Activated naive CD4-positive, alpha-beta T cell treated with anti-CD3 and anti-CD28 coated beads for 36 hours (primary cell): ENCODE measurements at regions of chr11 and their contacts with region 1.

Region 1: DNA sequence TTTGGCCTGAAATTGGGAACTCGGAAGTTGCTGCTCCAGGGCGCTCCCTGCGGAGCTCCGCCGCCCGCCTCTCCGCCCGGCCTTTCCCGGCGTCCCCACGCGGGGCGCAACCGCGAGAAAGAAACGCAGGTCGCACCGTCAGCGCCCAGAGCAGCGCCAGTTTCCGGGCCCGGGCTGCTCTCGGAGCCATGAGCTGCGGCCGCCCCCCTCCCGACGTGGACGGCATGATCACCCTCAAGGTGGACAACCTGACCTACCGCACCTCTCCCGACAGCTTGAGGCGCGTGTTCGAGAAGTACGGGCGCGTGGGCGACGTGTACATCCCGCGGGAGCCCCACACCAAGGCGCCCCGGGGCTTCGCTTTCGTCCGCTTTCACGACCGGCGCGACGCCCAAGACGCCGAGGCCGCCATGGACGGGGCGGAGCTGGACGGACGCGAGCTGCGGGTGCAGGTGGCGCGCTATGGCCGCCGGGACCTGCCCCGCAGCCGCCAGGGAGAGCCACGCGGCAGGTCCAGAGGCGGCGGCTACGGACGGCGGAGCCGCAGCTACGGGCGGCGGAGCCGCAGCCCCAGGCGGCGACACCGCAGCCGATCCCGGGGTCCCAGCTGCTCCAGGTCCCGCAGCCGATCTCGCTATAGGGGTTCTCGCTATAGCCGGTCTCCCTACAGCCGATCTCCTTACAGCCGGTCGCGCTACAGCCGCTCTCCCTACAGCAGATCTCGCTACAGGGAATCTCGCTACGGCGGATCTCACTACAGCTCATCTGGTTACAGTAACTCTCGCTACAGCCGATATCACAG is 521 bp downstream of the SRSF8 start:
- DNase-seq: peak; percentile 82
- H3K4me3 Mint-ChIP-seq: peak overlapping the region; percentile 91
- H3K27ac Mint-ChIP-seq: peak overlapping the region; percentile 96
- H3K4me1 Mint-ChIP-seq: peaks cover 23% of the 10 kb centered on the region
- H3K27me3 Mint-ChIP-seq: no peaks in the 10 kb centered on the region

Region 2: DNA sequence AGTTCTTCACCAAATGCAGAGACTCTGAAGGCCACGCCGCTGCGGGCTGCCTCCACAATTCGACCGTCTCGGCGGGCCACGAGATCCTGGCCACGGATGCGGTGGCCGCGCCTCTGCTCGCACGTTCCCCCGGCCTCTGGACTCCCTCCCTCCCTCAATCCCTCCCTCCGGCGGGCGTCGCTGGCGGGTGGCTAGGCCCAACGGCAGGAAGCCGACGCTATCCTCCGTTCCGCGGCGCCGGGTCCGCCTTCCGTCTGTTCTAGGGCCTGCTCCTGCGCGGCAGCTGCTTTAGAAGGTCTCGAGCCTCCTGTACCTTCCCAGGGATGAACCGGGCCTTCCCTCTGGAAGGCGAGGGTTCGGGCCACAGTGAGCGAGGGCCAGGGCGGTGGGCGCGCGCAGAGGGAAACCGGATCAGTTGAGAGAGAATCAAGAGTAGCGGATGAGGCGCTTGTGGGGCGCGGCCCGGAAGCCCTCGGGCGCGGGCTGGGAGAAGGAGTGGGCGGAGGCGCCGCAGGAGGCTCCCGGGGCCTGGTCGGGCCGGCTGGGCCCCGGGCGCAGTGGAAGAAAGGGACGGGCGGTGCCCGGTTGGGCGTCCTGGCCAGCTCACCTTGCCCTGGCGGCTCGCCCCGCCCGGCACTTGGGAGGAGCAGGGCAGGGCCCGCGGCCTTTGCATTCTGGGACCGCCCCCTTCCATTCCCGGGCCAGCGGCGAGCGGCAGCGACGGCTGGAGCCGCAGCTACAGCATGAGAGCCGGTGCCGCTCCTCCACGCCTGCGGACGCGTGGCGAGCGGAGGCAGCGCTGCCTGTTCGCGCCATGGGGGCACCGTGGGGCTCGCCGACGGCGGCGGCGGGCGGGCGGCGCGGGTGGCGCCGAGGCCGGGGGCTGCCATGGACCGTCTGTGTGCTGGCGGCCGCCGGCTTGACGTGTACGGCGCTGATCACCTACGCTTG is 523.3 kb before region 1 on chr11 and contains the start of gene FUT4:
- CTCF ChIA-PET with region 1: no interaction called
- intact Hi-C with region 1: loop called (anchors 5 kb)
- DNase-seq: peak; percentile 80
- H3K4me3 Mint-ChIP-seq: peak within 1 kb of the TSS; percentile 100
- H3K27ac Mint-ChIP-seq: peak within 1 kb of the TSS; percentile 98
- H3K4me1 Mint-ChIP-seq: peaks cover 32% of the 10 kb centered on the region
- H3K27me3 Mint-ChIP-seq: no peaks in the 10 kb centered on the region
- total RNA-seq, gene FUT4: 2.8 to 2.9 TPM

Region 3: GRCh38 chr11:94925422-94926270 is 141.6 kb before region 1 on chr11:
- CTCF ChIA-PET with region 1: interaction called, 6 read pairs
- intact Hi-C with region 1: loop called (anchors 2 kb)
- DNase-seq: no peak
- H3K4me3 Mint-ChIP-seq: no peak overlapping the region
- H3K27ac Mint-ChIP-seq: peak overlapping the region; percentile 26
- H3K4me1 Mint-ChIP-seq: peaks cover 42% of the 10 kb centered on the region
- H3K27me3 Mint-ChIP-seq: no peaks in the 10 kb centered on the region

Region 4: GRCh38 chr11:95089620-95090542 is 22.6 kb after region 1 on chr11 and contains the start of gene ENDOD1:
- CTCF ChIA-PET with region 1: interaction called, 132 read pairs
- intact Hi-C with region 1: loop called (anchors 1 kb)
- DNase-seq: peak; percentile 82
- H3K4me3 Mint-ChIP-seq: peak within 1 kb of the TSS; percentile 86
- H3K27ac Mint-ChIP-seq: peak within 1 kb of the TSS; percentile 87
- H3K4me1 Mint-ChIP-seq: peaks cover 64% of the 10 kb centered on the region
- H3K27me3 Mint-ChIP-seq: no peaks in the 10 kb centered on the region
- total RNA-seq, gene ENDOD1: 14.5 to 15.2 TPM

Region 5: GRCh38 chr11:95337175-95337957 is 270.1 kb after region 1 on chr11:
- CTCF ChIA-PET with region 1: no interaction called
- intact Hi-C with region 1: loop called (anchors 1 kb)
- DNase-seq: peak; percentile 69
- H3K4me3 Mint-ChIP-seq: no peak overlapping the region
- H3K27ac Mint-ChIP-seq: no peak overlapping the region
- H3K4me1 Mint-ChIP-seq: peaks cover 4% of the 10 kb centered on the region
- H3K27me3 Mint-ChIP-seq: no peaks in the 10 kb centered on the region

Region 6: DNA sequence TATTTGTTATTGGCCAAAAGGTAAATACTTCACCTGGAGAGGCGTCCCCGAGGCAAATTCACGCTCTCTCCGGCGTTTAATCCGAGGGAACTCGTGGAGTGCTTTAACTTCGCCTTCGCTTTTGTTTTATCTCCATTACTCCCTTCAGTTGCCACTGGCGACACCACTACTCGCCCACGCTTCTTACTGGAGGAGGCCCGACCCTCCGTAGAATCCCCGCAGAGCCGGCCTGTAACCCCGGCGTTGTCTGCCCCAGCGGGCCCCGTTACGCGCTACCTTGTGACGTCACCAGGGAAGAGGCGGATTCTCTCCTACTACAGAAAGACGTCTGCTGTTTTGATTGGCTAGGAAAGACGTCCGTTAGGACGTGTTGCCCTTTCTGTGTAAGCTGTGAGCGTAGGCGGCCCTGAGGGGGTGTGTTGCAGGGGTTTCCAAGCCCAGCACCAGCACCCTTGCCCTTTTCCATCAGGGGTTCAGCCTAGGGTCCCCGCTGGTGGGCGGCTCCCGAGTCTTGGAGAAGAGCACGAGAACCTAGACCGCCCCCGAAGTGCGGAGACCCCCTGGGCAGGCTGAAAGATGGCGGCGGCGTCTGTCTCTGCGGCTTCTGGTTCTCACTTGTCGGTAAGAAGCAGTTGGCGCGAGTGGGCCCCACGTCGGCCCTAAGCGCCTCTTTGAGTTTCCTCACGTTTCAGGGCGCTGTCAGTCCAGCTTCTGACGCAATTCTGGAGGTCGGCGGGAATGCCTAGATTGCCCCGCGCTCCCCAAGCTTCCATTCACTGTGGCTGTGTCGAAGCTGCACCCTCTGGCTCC is 723.1 kb after region 1 on chr11 and contains the start of gene CEP57:
- CTCF ChIA-PET with region 1: no interaction called
- intact Hi-C with region 1: loop called (anchors 1 kb)
- DNase-seq: peak; percentile 98
- H3K4me3 Mint-ChIP-seq: peak within 1 kb of the TSS; percentile 99
- H3K27ac Mint-ChIP-seq: peak within 1 kb of the TSS; percentile 100
- H3K4me1 Mint-ChIP-seq: peaks cover 56% of the 10 kb centered on the region
- H3K27me3 Mint-ChIP-seq: no peaks in the 10 kb centered on the region
- total RNA-seq, gene CEP57: 110 to 115 TPM